AG04449 (cell line): ENCODE measurements at regions of chr14 and their contacts with region 1.

Region 1: DNA sequence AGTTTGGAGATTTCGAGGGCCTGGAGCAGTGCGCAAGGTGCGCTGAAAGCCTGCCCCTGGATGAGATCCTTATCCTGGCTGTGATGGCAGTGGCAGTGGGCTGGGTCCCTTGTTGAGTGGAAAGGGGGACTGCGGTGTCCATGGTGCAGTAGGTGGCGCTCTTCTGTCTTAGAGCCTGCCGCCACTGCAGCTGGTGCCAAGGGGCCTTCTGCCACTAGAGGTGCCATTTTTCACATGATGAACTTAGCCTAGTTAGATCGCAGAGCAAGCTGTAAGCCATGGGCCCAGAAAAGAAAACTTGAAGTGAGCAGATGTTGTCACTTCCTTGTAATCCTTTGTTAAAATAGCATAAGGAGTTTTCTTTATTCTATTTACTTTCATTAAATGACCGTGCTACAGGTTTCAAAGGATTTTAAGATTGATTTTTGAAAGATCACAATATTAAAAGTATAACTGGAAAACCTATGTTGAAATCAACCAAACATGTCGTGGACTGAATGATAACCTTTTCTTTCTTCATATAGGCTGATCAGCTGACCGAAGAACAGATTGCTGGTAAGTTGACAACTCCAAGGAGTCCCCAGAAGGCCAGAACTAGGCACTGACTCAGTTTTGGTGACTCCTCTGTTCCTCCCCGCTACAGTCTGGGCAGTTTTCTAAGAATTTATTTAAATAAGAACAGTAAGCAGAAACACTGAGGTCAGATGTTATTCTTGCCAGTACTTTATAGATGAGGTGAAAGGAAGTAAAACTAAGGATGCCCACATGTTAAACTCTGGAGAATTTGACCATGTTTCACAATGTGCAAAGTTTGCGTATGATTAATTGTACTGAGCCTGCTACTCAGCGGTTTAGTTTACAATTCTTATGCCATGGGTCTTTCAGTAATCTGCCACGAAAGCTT is 3.0 kb downstream of the CALM1 start:
- DNase-seq: no peak
- H3K4me3 ChIP-seq: peak overlapping the region; percentile 97
- CTCF ChIP-seq: peak; percentile 100

Region 2: GRCh38 chr14:90301668-90302090 is 98.1 kb before region 1 on chr14:
- CTCF ChIA-PET with region 1: interaction called, 27 read pairs
- POLR2A ChIA-PET with region 1: interaction called, 8 read pairs
- DNase-seq: peak; percentile 38
- H3K4me3 ChIP-seq: no peak overlapping the region
- CTCF ChIP-seq: peak; percentile 45

Region 3: DNA sequence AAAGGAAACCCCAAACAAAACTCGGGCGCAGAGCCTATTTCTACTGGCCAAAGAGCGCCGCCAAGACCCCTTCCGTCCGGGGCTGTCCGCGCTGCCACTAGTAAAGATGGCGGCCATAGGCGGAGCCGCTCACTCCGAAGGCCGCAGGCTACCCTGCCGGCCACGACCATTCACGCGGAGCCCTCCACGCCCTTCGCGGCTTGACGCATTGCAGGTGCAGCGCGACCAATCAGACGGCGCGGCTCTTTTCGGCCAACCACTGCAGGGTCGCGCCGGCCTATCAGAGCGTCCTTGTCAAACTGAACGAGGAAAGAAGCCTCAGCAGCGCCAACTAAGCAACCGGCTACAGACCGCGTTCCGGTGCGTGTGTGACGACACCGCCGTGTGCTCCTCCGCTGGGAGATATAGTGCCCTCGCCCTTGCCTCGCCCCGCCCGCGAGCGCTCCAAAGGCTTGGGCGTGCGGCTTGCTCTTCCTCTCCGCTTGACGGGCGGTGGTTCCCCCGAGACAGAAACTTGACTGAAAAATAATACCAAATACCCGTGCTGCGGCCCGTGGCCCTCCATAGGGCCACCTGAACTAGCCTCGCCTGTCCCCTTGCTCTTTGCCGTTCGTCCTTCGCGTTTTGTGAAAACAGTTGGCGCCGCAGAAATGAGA is 16.6 kb before region 1 on chr14:
- CTCF ChIA-PET with region 1: interaction called, 32 read pairs
- POLR2A ChIA-PET with region 1: interaction called, 19 read pairs
- DNase-seq: peak; percentile 99
- H3K4me3 ChIP-seq: peak overlapping the region; percentile 71
- CTCF ChIP-seq: peak; percentile 17

Region 4: GRCh38 chr14:90388437-90388836 is 11.4 kb before region 1 on chr14:
- CTCF ChIA-PET with region 1: interaction called, 32 read pairs
- POLR2A ChIA-PET with region 1: interaction called, 18 read pairs
- DNase-seq: no peak
- H3K4me3 ChIP-seq: no peak overlapping the region
- CTCF ChIP-seq: no peak

Region 5: GRCh38 chr14:90419200-90419599 is 19.4 kb after region 1 on chr14:
- CTCF ChIA-PET with region 1: interaction called, 15 read pairs
- POLR2A ChIA-PET with region 1: interaction called, 3 read pairs
- DNase-seq: peak; percentile 72
- H3K4me3 ChIP-seq: no peak overlapping the region
- CTCF ChIP-seq: no peak

Region 6: DNA sequence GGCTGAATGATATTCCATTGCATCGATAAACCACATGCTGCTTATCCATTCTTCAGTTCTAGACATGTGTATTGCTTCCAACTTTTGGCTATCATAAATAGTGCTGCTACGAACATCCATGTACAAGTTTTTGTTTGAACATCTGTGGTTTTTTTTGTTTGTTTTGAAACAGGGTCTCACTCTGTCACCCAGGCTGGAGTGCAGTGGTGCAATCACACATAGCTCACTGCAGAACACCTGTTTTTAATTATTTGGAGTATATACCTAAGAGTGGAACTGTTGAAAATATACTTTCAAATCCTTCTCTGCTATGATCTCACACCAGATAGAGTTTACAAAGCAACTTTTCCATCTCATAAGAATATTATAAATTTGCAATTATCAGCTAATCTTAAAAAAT is 292.3 kb after region 1 on chr14:
- CTCF ChIA-PET with region 1: interaction called, 107 read pairs
- POLR2A ChIA-PET with region 1: interaction called, 7 read pairs
- DNase-seq: no peak
- H3K4me3 ChIP-seq: no peak overlapping the region
- CTCF ChIP-seq: no peak